ENCODE measurements at regions of chr1 and their contacts with region 1.

Region 1: GRCh38 chr1:179586107-179586823 is 5.4 kb upstream of the TDRD5 start:
- DNase-seq: peak; percentile 93
- H3K4me3 ChIP-seq: peak overlapping the region; percentile 46 to 57
- H3K27ac ChIP-seq: no peak overlapping the region
- H3K4me1 ChIP-seq: no peaks in the 10 kb centered on the region; a peak in 2 of 4 replicates
- H3K27me3 ChIP-seq: no peaks in the 10 kb centered on the region; the same call in 1 of the 2 replicates
- CTCF ChIP-seq: peak; percentile 54
- EP300 ChIP-seq: no peak
- RAD21 ChIP-seq: peak; percentile 29

Region 2: GRCh38 chr1:179318491-179318890 is 267.8 kb before region 1 on chr1:
- CTCF ChIA-PET with region 1: no interaction called
- POLR2A ChIA-PET with region 1: no interaction called
- DNase-seq: no peak
- H3K4me3 ChIP-seq: no peak overlapping the region
- H3K27ac ChIP-seq: no peak overlapping the region
- H3K4me1 ChIP-seq: no peaks in the 10 kb centered on the region
- H3K27me3 ChIP-seq: no peaks in the 10 kb centered on the region
- CTCF ChIP-seq: no peak
- EP300 ChIP-seq: no peak
- RAD21 ChIP-seq: no peak

Region 3: GRCh38 chr1:179447489-179447888 is 138.8 kb before region 1 on chr1:
- CTCF ChIA-PET with region 1: no interaction called
- POLR2A ChIA-PET with region 1: no interaction called
- DNase-seq: no peak
- H3K4me3 ChIP-seq: no peak overlapping the region
- H3K27ac ChIP-seq: no peak overlapping the region
- H3K4me1 ChIP-seq: no peaks in the 10 kb centered on the region
- H3K27me3 ChIP-seq: no peaks in the 10 kb centered on the region
- CTCF ChIP-seq: peak; percentile 40
- EP300 ChIP-seq: no peak
- RAD21 ChIP-seq: no peak

Region 4: GRCh38 chr1:179599623-179600249 is 13.5 kb after region 1 on chr1:
- CTCF ChIA-PET with region 1: interaction called, 16 read pairs
- POLR2A ChIA-PET with region 1: no interaction called
- DNase-seq: no peak
- H3K4me3 ChIP-seq: no peak overlapping the region
- H3K27ac ChIP-seq: no peak overlapping the region
- H3K4me1 ChIP-seq: no peaks in the 10 kb centered on the region
- H3K27me3 ChIP-seq: no peaks in the 10 kb centered on the region
- CTCF ChIP-seq: peak; percentile 51
- EP300 ChIP-seq: no peak
- RAD21 ChIP-seq: peak; percentile 57